ENCODE measurements at regions of chr9 and their contacts with region 1.

Region 1: GRCh38 chr9:92378865-92379560 is 25.4 kb downstream of the OGN start:
- DNase-seq: no peak
- H3K4me3 ChIP-seq: no peak overlapping the region
- H3K27ac ChIP-seq: no peak overlapping the region
- H3K4me1 ChIP-seq: no peaks in the 10 kb centered on the region
- H3K27me3 ChIP-seq: no peaks in the 10 kb centered on the region
- CTCF ChIP-seq: no peak

Region 2: GRCh38 chr9:92070036-92070435 is 309.0 kb before region 1 on chr9:
- CTCF ChIA-PET with region 1: no interaction called
- dilution Hi-C with region 1: no loop called
- in situ Hi-C with region 1: no loop called
- intact Hi-C with region 1: no loop called
- DNase-seq: no peak
- H3K4me3 ChIP-seq: no peak overlapping the region
- H3K27ac ChIP-seq: no peak overlapping the region
- H3K4me1 ChIP-seq: no peaks in the 10 kb centered on the region
- H3K27me3 ChIP-seq: no peaks in the 10 kb centered on the region
- CTCF ChIP-seq: no peak

Region 3: DNA sequence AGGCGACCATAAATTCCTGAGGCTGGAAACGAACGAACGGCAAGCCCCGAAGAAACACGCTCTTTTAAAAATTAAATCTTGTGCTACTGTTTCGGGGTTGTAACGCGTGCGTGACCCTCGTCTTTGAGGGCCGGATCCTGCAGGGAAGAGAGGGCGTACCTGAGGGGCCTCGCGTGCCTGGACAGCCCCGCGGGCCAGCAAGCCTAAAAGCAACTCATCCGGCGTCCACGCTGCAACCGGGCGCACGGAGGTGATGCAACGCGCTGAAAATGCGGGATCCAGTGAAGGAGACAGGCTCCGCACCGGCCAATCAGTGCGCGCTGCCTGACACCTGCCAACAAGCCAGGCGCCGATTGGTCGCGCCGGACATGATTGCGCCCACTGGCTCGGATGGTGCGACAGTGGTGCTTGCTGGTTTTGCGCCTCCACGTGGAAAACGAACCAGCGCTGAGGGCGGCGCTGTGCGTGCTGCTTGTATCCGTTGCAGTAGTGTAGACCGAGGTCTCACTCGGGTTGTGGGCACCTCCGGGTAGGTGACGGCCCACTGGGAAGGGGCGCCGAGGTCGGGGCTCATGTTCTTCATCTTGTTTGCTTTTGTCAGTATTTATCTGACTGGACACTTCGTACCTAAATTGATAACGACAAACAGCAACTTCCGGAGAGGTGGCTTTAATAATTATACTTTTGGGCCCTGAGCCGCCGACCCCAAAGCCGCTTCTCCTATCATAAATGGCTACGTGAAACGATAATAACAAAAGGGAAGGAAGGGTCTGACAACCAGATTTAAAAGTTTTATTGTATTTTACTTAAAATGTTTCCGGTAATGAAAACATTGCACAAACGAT is 85.3 kb before region 1 on chr9 and contains the start of gene IARS1:
- CTCF ChIA-PET with region 1: no interaction called
- dilution Hi-C with region 1: loop called (anchors 5 kb)
- in situ Hi-C with region 1: no loop called
- intact Hi-C with region 1: no loop called
- DNase-seq: peak; percentile 98
- H3K4me3 ChIP-seq: peak within 1 kb of the TSS; percentile 75 to 100 (median 99)
- H3K27ac ChIP-seq: peak within 1 kb of the TSS; percentile 95
- H3K4me1 ChIP-seq: peaks cover 35% of the 10 kb centered on the region
- H3K27me3 ChIP-seq: no peaks in the 10 kb centered on the region
- CTCF ChIP-seq: peak; percentile 5 to 38
- total RNA-seq, gene IARS1: 240 to 401 TPM